IMR-90 (cell line): ENCODE measurements at regions of chr2 and their contacts with region 1.

Region 1: DNA sequence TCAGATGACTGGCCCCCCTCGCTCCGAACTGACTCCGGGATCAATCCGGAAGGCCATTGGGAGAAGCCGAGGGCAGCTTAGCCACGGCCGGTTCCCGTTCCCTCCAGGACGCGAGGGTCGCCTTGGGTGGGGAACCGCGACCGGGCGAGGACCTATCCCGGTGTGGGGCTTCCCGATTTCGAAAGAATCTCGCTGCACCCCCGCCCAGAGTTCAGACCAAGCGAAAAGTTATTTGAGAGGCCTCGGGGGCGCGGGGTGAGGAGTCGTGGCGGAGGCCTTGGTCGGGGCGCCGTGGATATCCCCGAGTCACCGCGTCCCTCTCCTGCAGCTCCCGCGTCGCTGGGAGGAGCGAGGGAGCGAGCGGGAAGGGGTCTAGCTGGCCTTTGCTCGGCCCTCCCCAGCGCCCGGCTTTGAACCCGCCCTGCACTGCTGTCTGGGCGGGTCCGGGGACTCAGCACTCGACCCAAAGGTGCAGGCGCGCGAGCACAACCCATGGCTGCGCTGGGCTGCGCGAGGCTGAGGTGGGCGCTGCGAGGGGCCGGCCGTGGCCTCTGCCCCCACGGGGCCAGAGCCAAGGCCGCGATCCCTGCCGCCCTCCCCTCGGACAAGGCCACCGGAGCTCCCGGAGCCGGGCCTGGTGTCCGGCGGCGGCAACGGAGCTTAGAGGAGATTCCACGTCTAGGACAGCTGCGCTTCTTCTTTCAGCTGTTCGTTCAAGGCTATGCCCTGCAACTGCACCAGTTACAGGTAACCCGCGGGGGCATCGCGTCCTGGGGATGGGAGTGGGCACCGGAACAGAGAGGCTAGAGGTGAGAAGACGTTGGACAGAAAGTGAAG is at the start of gene CYP27A1:
- DNase-seq: no peak
- ATAC-seq: peak; percentile 79
- H3K4me3 ChIP-seq: peak within 1 kb of the TSS; percentile 44
- H3K27ac ChIP-seq: peak within 1 kb of the TSS; percentile 50
- H3K4me1 ChIP-seq: peaks cover 3% of the 10 kb centered on the region; the same call in 1 of the 2 replicates
- H3K27me3 ChIP-seq: no peaks in the 10 kb centered on the region
- CTCF ChIP-seq: no peak
- POLR2A ChIP-seq: no peak
- RAD21 ChIP-seq: no peak
- total RNA-seq, gene CYP27A1: 4.2 and 5.2 TPM in 2 replicates

Region 2: DNA sequence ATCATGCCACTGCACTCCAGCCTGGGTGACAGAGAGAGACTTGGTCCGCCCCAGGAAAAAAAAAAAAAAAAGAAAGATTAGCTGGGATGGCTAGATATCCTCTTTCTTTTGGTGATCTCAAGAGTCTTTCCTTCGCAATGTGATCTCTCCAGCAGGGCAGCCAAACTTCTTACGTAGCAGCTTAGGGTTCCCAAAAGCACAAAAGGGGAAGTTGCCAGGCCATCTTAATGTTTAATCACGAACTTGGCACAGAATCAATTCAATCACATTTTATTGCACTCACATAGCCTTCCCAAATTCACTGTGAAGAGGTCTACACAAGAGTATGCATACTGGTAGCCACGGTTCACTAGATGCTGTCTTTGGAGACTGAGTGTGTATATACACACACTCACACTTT is 309.9 kb before region 1 on chr2:
- CTCF ChIA-PET with region 1: no interaction called
- POLR2A ChIA-PET with region 1: interaction called, 12 read pairs
- dilution Hi-C with region 1: no loop called
- in situ Hi-C with region 1: no loop called
- intact Hi-C with region 1: no loop called
- DNase-seq: no peak
- ATAC-seq: no peak
- H3K4me3 ChIP-seq: no peak overlapping the region
- H3K27ac ChIP-seq: no peak overlapping the region
- H3K4me1 ChIP-seq: peaks cover 3% of the 10 kb centered on the region; the same call in 1 of the 2 replicates
- H3K27me3 ChIP-seq: no peaks in the 10 kb centered on the region
- CTCF ChIP-seq: no peak
- POLR2A ChIP-seq: no peak
- RAD21 ChIP-seq: no peak

Region 3: DNA sequence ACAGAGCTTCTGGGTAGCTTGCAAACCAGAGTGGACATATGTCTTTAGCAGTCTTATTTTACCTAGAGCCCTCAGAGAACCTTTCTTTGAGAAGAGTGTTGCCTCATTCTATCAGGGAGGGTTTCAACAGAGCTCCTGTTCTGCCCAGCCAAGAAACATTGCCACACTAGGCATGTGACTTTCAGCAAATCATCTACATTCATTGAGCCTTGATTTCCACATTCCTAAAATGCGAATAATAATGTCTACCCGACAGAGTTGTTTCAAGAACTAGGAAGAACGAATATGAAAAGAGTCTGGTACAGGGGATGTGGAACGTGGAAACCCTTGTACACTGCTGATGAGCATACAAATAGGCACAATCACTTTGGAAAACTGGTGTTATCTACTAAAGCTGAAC is 57.5 kb after region 1 on chr2:
- CTCF ChIA-PET with region 1: no interaction called
- POLR2A ChIA-PET with region 1: no interaction called
- dilution Hi-C with region 1: no loop called
- in situ Hi-C with region 1: no loop called
- intact Hi-C with region 1: loop called (anchors 5 kb)
- DNase-seq: peak; percentile 62
- ATAC-seq: no peak; the same call in none of the 2 replicates
- H3K4me3 ChIP-seq: no peak overlapping the region
- H3K27ac ChIP-seq: no peak overlapping the region
- H3K4me1 ChIP-seq: no peaks in the 10 kb centered on the region; the same call in 1 of the 2 replicates
- H3K27me3 ChIP-seq: peaks cover 12% of the 10 kb centered on the region
- CTCF ChIP-seq: no peak
- POLR2A ChIP-seq: no peak
- RAD21 ChIP-seq: no peak

Region 4: DNA sequence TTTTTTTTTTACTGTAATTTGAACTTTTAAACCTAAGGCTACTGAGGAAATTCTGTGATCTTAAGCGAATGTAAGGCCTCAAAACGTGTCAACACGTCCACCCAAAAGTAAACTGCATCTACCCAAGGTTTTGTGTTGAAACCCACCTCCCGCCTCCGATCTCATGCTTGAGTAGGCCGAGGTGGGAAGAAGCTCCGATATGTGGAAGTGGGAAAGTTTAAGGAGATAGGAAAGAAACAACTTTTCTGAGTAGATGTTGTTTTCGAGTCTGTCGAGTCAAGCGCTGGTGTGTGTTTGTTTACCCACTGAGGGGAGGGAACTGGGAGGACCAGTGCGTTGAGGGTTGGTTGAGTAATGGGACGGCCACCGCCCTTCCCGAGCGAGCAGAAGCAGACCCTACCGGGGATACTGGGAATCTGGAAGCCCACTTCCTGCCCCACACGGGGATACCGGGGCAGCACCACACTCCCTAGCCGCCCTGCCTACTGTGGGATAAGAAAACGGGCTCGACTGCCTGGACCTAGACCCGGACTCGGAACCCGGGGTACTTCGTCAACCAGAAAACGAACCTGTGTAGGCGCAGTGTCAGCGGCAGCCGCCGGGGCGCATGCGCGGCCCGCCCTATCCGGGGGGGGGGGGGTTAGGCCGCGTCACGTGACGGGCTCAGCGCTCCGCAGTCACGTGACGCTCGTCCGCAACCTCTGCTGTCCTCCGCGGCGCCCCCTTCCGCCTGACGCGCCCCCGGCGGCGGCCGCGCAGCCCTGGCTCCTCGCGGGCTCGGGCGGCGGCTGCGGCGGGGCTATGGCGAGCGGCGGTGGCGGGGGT is 395.9 kb after region 1 on chr2 and contains the start of gene RETREG2:
- CTCF ChIA-PET with region 1: no interaction called
- POLR2A ChIA-PET with region 1: no interaction called
- dilution Hi-C with region 1: no loop called
- in situ Hi-C with region 1: no loop called
- intact Hi-C with region 1: no loop called
- DNase-seq: peak; percentile 89
- ATAC-seq: peak; percentile 73
- H3K4me3 ChIP-seq: peak within 1 kb of the TSS; percentile 64
- H3K27ac ChIP-seq: peak within 1 kb of the TSS; percentile 96
- H3K4me1 ChIP-seq: 0 out of 2 replicates have a peak, but pooled peaks cover 6% of the 10 kb centered on the region
- H3K27me3 ChIP-seq: no peaks in the 10 kb centered on the region
- CTCF ChIP-seq: peak; percentile 56
- POLR2A ChIP-seq: peak; percentile 89
- RAD21 ChIP-seq: 0 out of 2 replicates have a peak, but pooled peaks have one; percentile 4
- total RNA-seq, gene RETREG2: 39.2 and 51.1 TPM in 2 replicates

Region 5: DNA sequence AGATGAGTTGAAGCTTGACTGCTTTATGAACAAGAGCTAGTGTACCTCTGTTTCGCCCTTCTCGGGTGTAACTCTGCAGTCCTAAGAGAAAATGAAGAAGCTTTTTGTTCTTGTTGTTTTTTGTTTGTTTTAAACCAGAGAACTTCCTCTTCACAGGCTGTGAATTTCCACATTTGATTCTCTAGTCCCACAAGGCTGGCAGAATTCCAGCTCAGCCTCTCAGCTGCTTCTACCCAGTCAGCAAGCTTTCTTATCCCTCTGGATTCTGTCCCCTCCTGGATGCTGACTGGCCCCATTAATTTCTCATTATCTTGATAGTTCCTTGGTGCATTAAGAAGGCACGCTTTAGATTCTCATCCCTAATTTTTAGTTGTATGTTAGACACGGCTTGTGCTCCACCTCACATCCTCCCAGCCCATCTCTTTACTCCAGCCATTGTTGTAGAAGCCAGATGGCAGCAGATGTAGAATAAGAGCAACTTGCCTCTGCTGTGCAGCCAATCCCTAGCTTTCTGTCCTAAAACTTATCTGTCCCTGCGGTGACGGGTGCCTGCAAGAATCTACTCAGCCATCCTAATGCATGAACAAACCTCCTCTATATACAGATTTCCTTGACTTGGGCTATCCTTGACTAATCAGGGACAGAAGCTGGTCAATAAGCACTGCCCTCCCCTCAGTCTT is 563.0 kb after region 1 on chr2:
- CTCF ChIA-PET with region 1: no interaction called
- POLR2A ChIA-PET with region 1: no interaction called
- dilution Hi-C with region 1: no loop called
- in situ Hi-C with region 1: no loop called
- intact Hi-C with region 1: no loop called
- DNase-seq: peak; percentile 12
- ATAC-seq: peak; percentile 35; the same call in 1 of the 2 replicates
- H3K4me3 ChIP-seq: no peak overlapping the region
- H3K27ac ChIP-seq: no peak overlapping the region
- H3K4me1 ChIP-seq: no peaks in the 10 kb centered on the region
- H3K27me3 ChIP-seq: peaks cover 27% of the 10 kb centered on the region
- CTCF ChIP-seq: no peak
- POLR2A ChIP-seq: no peak
- RAD21 ChIP-seq: no peak

Region 6: DNA sequence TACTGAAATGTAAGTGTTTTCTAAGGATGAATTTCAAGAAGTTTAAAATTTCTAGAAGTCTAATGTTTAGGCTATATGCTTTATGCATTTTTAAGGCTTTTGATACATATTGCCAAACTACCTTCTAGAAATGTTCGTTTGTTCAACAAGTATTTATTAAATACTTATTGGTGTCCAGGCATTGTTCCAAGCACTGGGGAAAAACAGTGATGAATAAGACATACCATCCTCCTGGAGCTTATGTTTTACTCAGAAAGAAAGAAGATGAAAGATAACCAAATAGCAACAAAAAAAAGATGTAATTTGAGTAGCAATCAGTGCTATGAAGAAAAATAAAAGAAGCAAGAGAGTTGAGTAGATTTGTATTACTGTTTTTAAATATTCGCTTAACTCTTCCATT is 1538.4 kb after region 1 on chr2:
- CTCF ChIA-PET with region 1: no interaction called
- POLR2A ChIA-PET with region 1: no interaction called
- dilution Hi-C with region 1: no loop called
- in situ Hi-C with region 1: no loop called
- intact Hi-C with region 1: no loop called
- DNase-seq: peak; percentile 73
- ATAC-seq: peak; percentile 51; the same call in 1 of the 2 replicates
- H3K4me3 ChIP-seq: no peak overlapping the region
- H3K27ac ChIP-seq: no peak overlapping the region
- H3K4me1 ChIP-seq: no peaks in the 10 kb centered on the region
- H3K27me3 ChIP-seq: no peaks in the 10 kb centered on the region
- CTCF ChIP-seq: no peak
- POLR2A ChIP-seq: no peak
- RAD21 ChIP-seq: no peak